Heart left ventricle (tissue), 16 donors: ENCODE measurements at regions of chr12 and their contacts with region 1.

Region 1: DNA sequence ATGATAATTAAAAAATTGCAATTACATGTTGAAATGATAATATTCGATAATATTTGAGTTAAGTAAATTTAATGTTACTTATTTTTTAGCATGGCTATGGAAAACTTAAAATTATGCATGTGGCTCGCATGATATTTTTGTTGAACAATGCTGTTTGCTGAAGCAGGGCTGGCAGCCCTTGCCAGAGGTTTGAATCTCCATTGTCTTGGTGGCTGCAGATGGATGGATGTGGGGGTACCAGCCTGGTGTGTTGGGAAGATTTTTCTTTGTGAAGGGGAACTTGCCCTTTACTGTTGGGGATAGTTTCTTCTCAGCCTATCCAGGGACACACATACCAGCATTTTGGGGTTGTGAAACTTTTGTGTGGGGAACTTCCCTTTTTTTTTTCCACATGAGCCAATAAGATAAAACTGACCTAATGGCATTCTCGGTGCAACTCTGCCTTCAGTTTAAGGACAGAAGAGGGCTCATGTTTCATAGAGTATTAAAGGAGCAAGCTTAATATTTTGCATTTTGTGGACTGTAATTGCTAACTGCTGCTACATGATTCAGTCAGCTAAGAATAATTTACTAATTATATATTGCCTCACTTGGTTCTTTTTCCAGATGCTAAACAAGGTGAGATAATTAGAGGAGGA is 8.8 kb downstream of the RASSF3 start:
- DNase-seq: no peak
- ATAC-seq: peak in 3 of 4 donors; percentile 36 to 77 (median 41)
- H3K4me3 ChIP-seq: no peak overlapping the region
- H3K27ac ChIP-seq: peak overlapping the region in 2 of 12 donors; percentile 3 to 79
- H3K4me1 ChIP-seq: peaks cover 0 to 95% (median 38%) of the 10 kb centered on the region in 12 donors
- H3K27me3 ChIP-seq: no peaks in the 10 kb centered on the region
- CTCF ChIP-seq: no peak
- POLR2A ChIP-seq: no peak

Region 2: DNA sequence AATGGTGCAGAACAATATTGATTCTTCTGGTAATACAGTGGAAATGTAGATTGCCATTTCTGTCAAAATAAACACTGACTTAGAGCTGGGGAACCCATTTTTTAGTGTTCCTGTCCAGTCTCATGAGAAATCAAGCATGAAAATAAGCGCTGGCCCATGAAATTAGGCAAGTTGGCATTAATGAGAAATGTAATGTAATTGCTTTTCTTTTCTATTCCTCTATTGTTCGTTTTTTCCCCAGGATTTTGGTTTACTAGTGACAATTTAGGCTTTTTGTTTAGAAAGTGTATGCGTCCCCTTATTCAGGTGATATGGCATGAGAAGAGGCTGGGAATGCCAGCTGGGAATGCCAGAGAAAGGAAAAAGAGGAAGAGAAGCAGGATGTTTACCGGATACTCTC is 332.6 kb before region 1 on chr12:
- intact Hi-C with region 1: no loop called
- DNase-seq: no peak
- ATAC-seq: no peak
- H3K4me3 ChIP-seq: no peak overlapping the region
- H3K27ac ChIP-seq: no peak overlapping the region
- H3K4me1 ChIP-seq: no peaks in the 10 kb centered on the region
- H3K27me3 ChIP-seq: no peaks in the 10 kb centered on the region
- CTCF ChIP-seq: no peak
- POLR2A ChIP-seq: no peak

Region 3: GRCh38 chr12:64656429-64656828 is 37.4 kb after region 1 on chr12:
- intact Hi-C with region 1: loop called in 1 of 10 experiments (anchors 5 kb)
- DNase-seq: no peak
- ATAC-seq: no peak
- H3K4me3 ChIP-seq: no peak overlapping the region
- H3K27ac ChIP-seq: peak overlapping the region in 4 of 12 donors; percentile 13 to 75 (median 26)
- H3K4me1 ChIP-seq: peaks cover 0 to 74% (median 23%) of the 10 kb centered on the region in 12 donors
- H3K27me3 ChIP-seq: no peaks in the 10 kb centered on the region
- CTCF ChIP-seq: no peak
- POLR2A ChIP-seq: no peak

Region 4: GRCh38 chr12:64669270-64669842 is 50.3 kb after region 1 on chr12:
- intact Hi-C with region 1: loop called in 7 of 10 experiments (anchors 5 kb)
- DNase-seq: peak; percentile 64 to 80 (median 68)
- ATAC-seq: peak; percentile 39 to 71 (median 48)
- H3K4me3 ChIP-seq: peak overlapping the region in 5 of 12 donors; percentile 0 to 25 (median 4)
- H3K27ac ChIP-seq: peak overlapping the region; percentile 48 to 89 (median 76)
- H3K4me1 ChIP-seq: peaks cover 18 to 100% (median 93%) of the 10 kb centered on the region in 12 donors
- H3K27me3 ChIP-seq: no peaks in the 10 kb centered on the region
- CTCF ChIP-seq: no peak
- POLR2A ChIP-seq: no peak

Region 5: DNA sequence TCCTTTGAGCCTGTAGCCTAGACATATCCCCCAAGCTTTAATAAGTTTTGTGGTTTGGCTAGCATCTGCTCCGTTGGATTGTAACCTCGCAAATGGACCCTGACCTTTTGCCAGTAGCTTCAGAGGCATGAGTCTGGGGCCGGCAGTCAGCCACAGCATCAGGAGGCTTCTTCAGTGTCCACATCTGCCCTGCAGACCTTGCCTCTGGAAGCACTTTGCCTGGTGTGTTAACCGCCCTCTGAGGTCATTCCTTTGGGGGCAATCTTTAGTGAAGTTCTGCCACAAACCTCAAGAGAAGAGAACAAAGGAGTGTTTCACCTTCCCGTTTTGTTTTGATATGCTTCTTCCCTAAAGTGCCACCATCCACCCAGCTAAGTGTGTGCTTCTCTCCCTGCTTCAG is 68.7 kb after region 1 on chr12:
- intact Hi-C with region 1: loop called in 2 of 10 experiments (anchors 5 kb)
- DNase-seq: no peak
- ATAC-seq: peak in 3 of 4 donors; percentile 8 to 38 (median 11)
- H3K4me3 ChIP-seq: no peak overlapping the region
- H3K27ac ChIP-seq: peak overlapping the region in 11 of 12 donors; percentile 22 to 88 (median 48)
- H3K4me1 ChIP-seq: peaks cover 0 to 70% (median 34%) of the 10 kb centered on the region in 12 donors
- H3K27me3 ChIP-seq: no peaks in the 10 kb centered on the region
- CTCF ChIP-seq: no peak
- POLR2A ChIP-seq: no peak